ENCODE measurements at regions of chr6 and their contacts with region 1.

Region 1: GRCh38 chr6:90478789-90479602 is 107.9 kb downstream of the MAP3K7 start:
- DNase-seq: peak; percentile 85
- H3K4me3 Mint-ChIP-seq: no peak overlapping the region
- H3K27ac Mint-ChIP-seq: peak overlapping the region; percentile 67
- H3K4me1 Mint-ChIP-seq: peaks cover 54% of the 10 kb centered on the region
- H3K27me3 Mint-ChIP-seq: peaks cover 2% of the 10 kb centered on the region

Region 2: GRCh38 chr6:90296346-90297114 is 182.5 kb before region 1 on chr6 and contains the start of gene BACH2:
- CTCF ChIA-PET with region 1: interaction called, 281 read pairs
- POLR2A ChIA-PET with region 1: interaction called, 76 read pairs
- DNase-seq: peak; percentile 95
- H3K4me3 Mint-ChIP-seq: peak within 1 kb of the TSS; percentile 87
- H3K27ac Mint-ChIP-seq: peak within 1 kb of the TSS; percentile 82
- H3K4me1 Mint-ChIP-seq: peaks cover 27% of the 10 kb centered on the region
- H3K27me3 Mint-ChIP-seq: peaks cover 44% of the 10 kb centered on the region
- total RNA-seq, gene BACH2: 30.3 to 31.1 TPM

Region 3: DNA sequence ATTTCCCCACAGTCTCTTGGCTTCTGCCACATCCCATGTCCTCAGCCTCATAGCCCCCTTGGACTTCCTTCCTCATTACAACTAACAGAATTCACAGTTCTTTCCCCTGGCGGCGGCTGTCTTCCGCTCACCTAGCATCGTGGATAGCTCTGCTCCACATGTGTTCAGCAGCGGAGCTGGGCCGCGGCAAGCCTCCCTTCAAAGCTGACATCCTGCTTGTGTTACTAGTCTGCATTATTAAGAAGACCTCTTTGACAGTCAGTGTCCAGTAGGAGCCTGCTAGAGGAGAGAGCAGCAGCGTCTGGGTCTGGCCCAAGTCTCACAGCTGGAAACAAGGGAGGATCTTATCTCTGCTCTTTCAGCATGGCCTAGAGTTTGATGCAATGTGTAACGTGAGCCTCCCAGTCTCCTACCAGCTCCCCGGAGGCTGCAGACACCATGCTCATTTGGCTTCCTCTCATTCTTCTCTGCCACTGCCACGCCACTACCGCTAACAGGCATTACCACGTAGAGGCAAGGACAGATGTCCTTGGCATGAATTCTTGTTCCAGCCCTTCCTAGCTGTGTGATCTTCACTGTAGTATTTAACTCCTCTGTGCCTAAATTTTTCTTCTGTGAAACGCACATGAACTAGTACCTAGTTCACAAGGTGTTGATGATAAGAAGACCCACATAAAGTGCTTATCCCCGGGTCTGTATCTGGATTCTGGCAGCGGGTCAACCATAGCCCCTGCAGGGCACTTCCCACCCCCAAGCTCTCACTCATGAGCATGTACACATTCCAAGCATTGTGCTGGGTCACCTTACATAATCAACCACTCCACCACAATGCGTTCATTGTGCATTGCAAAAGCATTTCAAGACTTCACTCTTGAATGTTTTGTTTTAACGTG is 75.3 kb before region 1 on chr6:
- CTCF ChIA-PET with region 1: interaction called, 132 read pairs
- POLR2A ChIA-PET with region 1: interaction called, 324 read pairs
- DNase-seq: no peak
- H3K4me3 Mint-ChIP-seq: peak overlapping the region; percentile 10
- H3K27ac Mint-ChIP-seq: peak overlapping the region; percentile 94
- H3K4me1 Mint-ChIP-seq: peaks cover 86% of the 10 kb centered on the region
- H3K27me3 Mint-ChIP-seq: peaks cover 5% of the 10 kb centered on the region

Region 4: GRCh38 chr6:90413867-90414266 is 65.1 kb before region 1 on chr6:
- CTCF ChIA-PET with region 1: interaction called, 135 read pairs
- POLR2A ChIA-PET with region 1: interaction called, 192 read pairs
- DNase-seq: peak; percentile 88
- H3K4me3 Mint-ChIP-seq: peak overlapping the region; percentile 82
- H3K27ac Mint-ChIP-seq: peak overlapping the region; percentile 97
- H3K4me1 Mint-ChIP-seq: peaks cover 86% of the 10 kb centered on the region
- H3K27me3 Mint-ChIP-seq: peaks cover 2% of the 10 kb centered on the region

Region 5: GRCh38 chr6:90458353-90459224 is 20.4 kb before region 1 on chr6:
- CTCF ChIA-PET with region 1: interaction called, 83 read pairs
- POLR2A ChIA-PET with region 1: interaction called, 258 read pairs
- DNase-seq: peak; percentile 82
- H3K4me3 Mint-ChIP-seq: peak overlapping the region; percentile 56
- H3K27ac Mint-ChIP-seq: peak overlapping the region; percentile 89
- H3K4me1 Mint-ChIP-seq: peaks cover 74% of the 10 kb centered on the region
- H3K27me3 Mint-ChIP-seq: no peaks in the 10 kb centered on the region

Region 6: DNA sequence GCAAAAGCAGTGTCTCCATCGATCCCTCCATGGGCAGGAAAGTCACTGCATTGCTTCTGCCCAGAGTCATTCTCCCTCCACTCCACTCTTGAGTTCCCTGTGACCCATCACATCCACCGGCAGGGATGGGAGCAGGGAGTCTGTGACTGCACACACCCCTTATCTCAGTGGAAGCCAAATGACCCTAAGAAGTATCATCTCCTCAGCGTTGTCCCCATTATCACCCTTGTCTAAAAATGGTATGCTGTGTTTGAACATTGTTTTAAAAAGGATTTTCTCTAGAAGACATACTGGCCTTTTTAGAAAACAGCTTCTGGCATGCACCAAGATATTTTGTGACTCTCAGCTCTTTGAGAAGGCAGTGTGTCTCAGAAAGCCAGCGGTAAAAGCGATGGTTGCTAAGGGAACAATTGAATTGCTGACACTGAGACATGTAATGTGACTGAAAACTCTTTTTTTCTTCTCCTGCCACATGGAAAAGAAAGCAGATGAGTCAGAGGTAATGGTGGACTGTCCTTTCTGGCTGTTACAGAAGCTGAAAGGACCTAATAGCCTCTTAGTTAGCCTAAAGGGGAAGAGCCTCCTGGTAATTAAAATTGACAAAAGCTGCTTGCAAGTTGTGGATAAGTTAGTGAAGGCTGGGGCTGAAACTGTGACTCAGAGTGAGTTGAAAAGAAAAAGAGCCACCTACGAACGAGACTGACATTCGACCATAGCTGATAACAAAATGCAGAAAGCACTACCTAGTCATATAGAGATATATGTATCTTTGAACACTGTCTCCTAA is 12.6 kb before region 1 on chr6:
- CTCF ChIA-PET with region 1: interaction called, 83 read pairs
- POLR2A ChIA-PET with region 1: interaction called, 258 read pairs
- DNase-seq: peak; percentile 53
- H3K4me3 Mint-ChIP-seq: peak overlapping the region; percentile 2
- H3K27ac Mint-ChIP-seq: peak overlapping the region; percentile 82
- H3K4me1 Mint-ChIP-seq: peaks cover 96% of the 10 kb centered on the region
- H3K27me3 Mint-ChIP-seq: peaks cover 10% of the 10 kb centered on the region

Region 7: DNA sequence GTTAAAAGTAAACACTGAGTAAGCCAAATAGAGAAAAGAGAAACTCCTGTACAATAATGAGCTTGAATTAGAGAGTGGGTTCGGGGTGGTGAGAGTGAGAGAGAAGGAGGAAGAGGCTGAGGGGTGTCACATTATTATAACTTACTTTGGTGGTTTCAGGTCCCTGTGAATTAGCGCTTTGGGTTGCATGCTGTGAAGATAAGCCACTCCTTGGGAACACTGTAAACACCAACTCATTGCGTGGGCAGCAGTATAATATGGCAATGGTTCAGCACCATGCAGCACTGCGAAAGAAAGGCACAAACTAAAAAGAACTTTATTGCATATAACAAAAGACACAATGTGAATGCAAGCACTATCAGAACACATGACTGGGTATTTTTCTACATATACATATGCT is 80.9 kb after region 1 on chr6:
- CTCF ChIA-PET with region 1: no interaction called
- POLR2A ChIA-PET with region 1: no interaction called
- DNase-seq: no peak
- H3K4me3 Mint-ChIP-seq: no peak overlapping the region
- H3K27ac Mint-ChIP-seq: no peak overlapping the region
- H3K4me1 Mint-ChIP-seq: peaks cover 20% of the 10 kb centered on the region
- H3K27me3 Mint-ChIP-seq: no peaks in the 10 kb centered on the region

Measured in activated CD4-positive, alpha-beta memory T cell treated with anti-CD3 and anti-CD28 coated beads, Interleukin-2, amount 10 ng/mL, durations not matched to agents 7 days and 5 days (primary cell).